Dorsolateral prefrontal cortex (tissue), 120 donors: ENCODE measurements at regions of chr11 and their contacts with region 1.

Region 1: DNA sequence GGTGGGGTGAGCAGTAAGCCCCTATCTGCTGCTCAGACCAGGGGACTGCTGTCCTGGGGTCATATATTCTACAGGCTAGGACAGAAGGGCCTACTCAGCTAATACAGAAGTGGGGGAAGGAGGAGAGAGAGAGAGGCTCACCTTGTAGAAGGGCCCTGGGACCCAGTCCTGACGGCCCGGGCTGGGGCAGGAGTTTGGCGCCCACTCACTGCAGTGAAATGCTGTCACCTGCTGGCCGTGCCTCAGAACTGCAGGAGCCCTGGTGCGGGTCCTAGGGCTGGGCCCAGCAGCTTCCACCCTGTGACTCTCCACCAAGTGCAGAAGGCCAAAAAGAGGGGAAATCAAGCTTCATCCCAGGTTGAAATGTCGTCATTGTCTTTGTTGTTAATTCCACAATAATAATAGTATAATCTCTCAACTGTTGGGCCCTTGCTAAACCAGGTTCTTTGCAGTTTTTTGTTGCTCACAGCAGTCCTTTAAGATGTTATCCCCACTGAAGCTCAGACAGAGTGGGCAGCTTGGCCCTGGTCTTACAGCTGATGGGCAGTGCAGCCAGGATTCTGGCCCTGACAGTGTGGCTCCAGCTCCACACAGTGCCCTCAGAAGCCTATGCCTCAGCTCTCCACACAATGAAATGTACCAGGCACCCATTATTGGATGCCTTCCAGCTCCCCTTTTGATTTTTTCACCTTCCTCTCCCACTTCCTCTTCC is 29.6 kb downstream of the TRIM29 start:
- DNase-seq: peak; percentile 78 to 90 (median 84)
- H3K4me3 ChIP-seq: peak overlapping the region in 1 of 59 donors; percentile 6
- H3K27ac ChIP-seq: peak overlapping the region in 52 of 59 donors; percentile 3 to 86 (median 64)
- H3K27me3 ChIP-seq: peaks cover 0 to 3% (median 0%) of the 10 kb centered on the region in 45 donors
- CTCF ChIP-seq: peak; percentile 93 to 100 (median 100)

Region 2: DNA sequence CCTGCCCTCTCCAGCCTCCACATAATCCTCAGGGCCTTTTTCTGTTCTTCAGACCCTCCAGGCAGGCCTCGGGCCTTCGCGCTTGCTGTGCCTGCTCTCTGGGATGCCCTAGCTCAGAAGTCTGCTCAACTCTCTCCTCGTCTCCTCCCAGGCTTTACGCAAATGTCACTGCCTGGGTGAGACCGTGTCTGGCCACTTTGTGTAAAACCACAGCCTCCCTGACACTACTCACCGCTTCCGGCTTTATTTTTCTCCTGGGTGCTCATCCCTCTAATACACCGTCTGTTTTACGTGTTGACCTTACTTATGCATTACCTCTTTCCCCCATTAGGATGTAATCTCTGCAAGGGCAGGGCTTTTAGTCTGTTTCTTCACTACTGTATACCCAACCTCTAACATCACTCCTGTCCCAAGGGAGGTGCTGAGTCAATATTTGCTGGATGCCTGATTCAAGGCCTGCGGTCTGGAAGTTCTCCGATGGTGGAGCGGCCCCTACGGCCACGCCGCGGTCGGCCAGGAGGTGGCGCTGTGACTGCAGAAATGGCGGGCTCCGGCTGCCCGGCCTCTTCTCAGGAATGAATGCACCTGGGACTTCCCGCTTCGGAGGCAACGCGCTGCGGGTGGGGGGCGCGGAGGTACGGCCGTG is 627.2 kb before region 1 on chr11:
- intact Hi-C with region 1: loop called (anchors 1 to 10 kb)
- DNase-seq: peak; percentile 67 to 93 (median 86)
- H3K4me3 ChIP-seq: peak overlapping the region in 43 of 59 donors; percentile 3 to 53 (median 33)
- H3K27ac ChIP-seq: peak overlapping the region in 3 of 59 donors; percentile 15 to 44 (median 22)
- H3K27me3 ChIP-seq: no peaks in the 10 kb centered on the region
- CTCF ChIP-seq: peak; percentile 87 to 100 (median 99)

Region 3: GRCh38 chr11:119816660-119817059 is 291.6 kb before region 1 on chr11:
- intact Hi-C with region 1: no loop called
- DNase-seq: no peak
- H3K4me3 ChIP-seq: no peak overlapping the region
- H3K27ac ChIP-seq: no peak overlapping the region
- H3K27me3 ChIP-seq: no peaks in the 10 kb centered on the region
- CTCF ChIP-seq: no peak

Region 4: DNA sequence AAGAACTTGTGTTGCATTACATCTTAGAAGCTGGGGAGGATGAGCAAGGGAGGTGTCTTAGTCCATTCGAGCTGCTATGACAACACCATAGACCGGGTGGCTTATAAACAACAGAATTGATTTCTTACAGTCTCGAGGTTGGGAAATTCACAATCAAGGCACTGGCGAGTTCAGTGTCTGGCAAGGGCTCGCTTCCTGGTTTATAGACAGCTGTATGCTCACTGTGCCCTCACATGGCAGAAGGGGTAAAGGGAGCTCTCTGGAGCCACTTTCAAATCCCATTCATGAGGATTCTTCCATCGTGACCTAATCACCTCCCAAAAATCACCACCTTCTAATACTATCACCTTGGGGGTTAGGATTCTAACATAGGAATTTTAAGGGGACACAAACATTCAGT is 229.3 kb before region 1 on chr11:
- intact Hi-C with region 1: no loop called
- DNase-seq: peak in 3 of 10 donors; percentile 34 to 49 (median 35)
- H3K4me3 ChIP-seq: no peak overlapping the region
- H3K27ac ChIP-seq: peak overlapping the region in 4 of 59 donors; percentile 11 to 46 (median 24)
- H3K27me3 ChIP-seq: no peaks in the 10 kb centered on the region
- CTCF ChIP-seq: peak in 29 of 56 donors; percentile 10 to 59 (median 26)

Region 5: DNA sequence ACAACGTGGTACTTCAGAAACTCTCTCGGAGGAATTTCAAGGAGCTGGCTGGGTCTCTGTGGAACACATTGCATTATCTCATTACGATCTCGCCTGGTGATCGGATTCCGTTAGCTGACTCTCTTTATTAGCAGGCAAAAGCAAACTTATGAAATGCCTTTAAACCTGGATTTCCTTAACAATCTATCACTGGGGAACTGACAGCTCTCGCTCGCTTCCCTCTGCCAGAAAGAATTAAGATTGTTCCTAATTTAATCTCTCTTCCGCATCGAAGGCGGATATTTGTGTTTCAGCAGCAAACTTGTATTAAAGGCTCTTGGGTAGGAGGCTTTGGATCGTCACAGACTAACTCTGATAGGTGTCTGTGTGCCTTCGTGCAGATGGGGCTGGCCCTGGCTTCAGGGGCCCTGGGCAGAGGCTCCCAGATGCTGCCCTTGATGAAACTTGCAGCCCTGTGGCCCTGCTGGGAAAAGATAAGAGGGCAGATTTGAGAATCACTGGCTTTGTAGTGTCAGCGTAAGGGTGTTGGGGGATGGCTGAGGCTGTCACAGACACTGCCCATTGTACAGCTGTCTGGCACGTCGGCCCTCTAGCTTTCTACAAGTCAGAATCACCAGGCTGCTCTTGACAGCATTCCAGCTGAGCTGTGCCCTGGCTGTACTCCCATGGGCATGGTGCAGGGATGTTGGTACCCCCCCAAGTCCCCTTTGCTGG is 217.1 kb before region 1 on chr11:
- intact Hi-C with region 1: loop called (anchors 5 to 10 kb)
- DNase-seq: peak in 9 of 10 donors; percentile 67 to 94 (median 87)
- H3K4me3 ChIP-seq: peak overlapping the region in 5 of 59 donors; percentile 18 to 36 (median 22)
- H3K27ac ChIP-seq: peak overlapping the region in 58 of 59 donors; percentile 51 to 99 (median 94)
- H3K27me3 ChIP-seq: peaks cover 0 to 7% (median 0%) of the 10 kb centered on the region in 45 donors
- CTCF ChIP-seq: peak in 15 of 56 donors; percentile 8 to 41 (median 23)

Region 6: DNA sequence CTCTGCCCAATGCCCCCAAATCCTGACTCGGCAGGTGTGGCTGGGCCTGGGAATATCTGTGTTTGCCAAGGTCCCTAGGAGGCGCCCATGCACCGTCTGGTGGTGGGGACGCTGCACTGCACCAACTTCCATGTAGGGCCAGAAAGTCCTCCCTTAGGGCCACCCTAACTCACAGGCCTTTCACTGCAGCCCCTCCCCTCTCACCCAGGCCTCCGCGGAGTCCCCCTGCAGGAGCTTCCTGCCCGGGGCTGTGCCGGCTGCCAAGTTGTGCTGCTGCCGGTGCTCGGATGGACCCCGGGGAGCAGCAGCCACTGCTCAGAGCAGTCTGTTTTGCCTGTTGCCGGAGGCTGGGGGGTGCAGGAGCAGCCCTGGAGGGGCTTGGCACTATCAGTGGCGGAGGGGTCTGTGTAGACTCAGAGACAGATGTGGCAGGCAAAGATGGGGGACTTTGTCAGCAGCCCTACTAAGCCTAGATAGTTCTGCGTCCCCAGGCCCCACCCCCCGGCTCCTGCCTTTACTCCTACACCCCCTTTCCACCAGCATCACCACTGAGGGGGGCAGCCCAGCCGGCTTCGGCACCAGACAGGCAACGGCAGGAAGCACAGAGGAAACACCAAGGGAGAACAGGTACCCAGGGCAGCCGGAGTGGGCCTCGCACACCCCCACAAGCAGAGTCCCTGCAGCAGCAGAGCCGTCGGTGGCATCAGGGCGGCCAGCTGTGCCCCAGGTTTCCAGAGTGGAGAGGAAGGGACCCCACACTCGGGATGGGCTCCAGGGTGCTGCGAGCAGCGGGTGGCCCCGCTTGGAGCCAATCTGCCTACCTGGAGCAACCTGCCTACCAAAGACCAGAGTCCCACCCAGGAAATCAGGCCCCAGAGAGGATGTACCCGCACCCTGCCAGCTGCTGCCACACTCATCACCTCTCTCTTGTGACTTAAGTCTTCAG is 94.7 kb before region 1 on chr11:
- intact Hi-C with region 1: loop called (anchors 2 to 10 kb)
- DNase-seq: peak; percentile 55 to 80 (median 74)
- H3K4me3 ChIP-seq: peak overlapping the region in 3 of 59 donors; percentile 11 to 23 (median 23)
- H3K27ac ChIP-seq: peak overlapping the region in 55 of 59 donors; percentile 4 to 92 (median 80)
- H3K27me3 ChIP-seq: peaks cover 0 to 22% (median 0%) of the 10 kb centered on the region in 45 donors
- CTCF ChIP-seq: peak; percentile 31 to 90 (median 76)

Region 7: GRCh38 chr11:120186774-120187591 is 78.7 kb after region 1 on chr11:
- intact Hi-C with region 1: no loop called
- DNase-seq: peak in 6 of 10 donors; percentile 26 to 58 (median 47)
- H3K4me3 ChIP-seq: peak overlapping the region in 3 of 59 donors; percentile 1 to 31 (median 13)
- H3K27ac ChIP-seq: peak overlapping the region in 48 of 59 donors; percentile 12 to 82 (median 50)
- H3K27me3 ChIP-seq: no peaks in the 10 kb centered on the region
- CTCF ChIP-seq: no peak